WTC11 (cell line): ENCODE measurements at regions of chr17 and their contacts with region 1.

Region 1: GRCh38 chr17:21275579-21276263 is 8.8 kb upstream of the MAP2K3 start:
- DNase-seq: peak; percentile 93
- ATAC-seq: peak; percentile 81
- H3K4me3 Mint-ChIP-seq: peak overlapping the region; percentile 76
- H3K27ac Mint-ChIP-seq: no peak overlapping the region
- H3K4me1 Mint-ChIP-seq: peaks cover 9% of the 10 kb centered on the region
- H3K27me3 Mint-ChIP-seq: peaks cover 48% of the 10 kb centered on the region
- CTCF ChIP-seq: no peak

Region 2: DNA sequence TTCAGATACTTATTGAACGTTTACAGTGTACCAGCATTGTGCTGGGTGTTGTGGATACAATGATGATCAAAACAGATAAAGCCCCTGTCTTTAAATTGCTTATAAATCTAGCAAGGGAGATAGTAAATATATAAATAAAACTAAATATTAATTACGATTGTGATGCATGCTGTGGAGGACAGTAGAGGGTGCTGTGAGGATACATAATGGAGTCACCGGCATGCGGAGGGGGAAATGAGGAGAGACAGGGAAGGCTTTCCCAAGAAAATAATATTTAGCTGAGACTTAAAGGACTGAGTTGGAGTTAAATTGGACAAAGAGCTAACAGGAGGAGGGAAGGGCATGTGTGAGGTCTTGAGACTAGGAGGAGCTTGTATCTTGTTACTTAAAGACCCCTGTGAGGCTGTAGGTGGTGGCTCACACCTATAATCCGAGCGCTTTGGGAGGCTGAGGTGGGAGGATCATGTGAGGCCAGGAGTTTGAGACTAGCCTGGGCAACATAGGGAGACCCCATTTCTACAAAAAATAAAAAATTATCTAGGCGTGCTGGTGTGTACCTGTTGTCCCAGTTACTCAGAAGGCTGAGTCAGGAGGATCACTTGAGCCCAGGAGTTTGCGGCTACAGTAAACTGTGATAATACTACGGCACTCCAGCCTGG is 146.6 kb before region 1 on chr17:
- CTCF ChIA-PET with region 1: interaction called, 15 read pairs
- POLR2A ChIA-PET with region 1: interaction called, 3 read pairs
- DNase-seq: no peak
- ATAC-seq: no peak
- H3K4me3 Mint-ChIP-seq: peak overlapping the region; percentile 45
- H3K27ac Mint-ChIP-seq: peak overlapping the region; percentile 75
- H3K4me1 Mint-ChIP-seq: peaks cover 35% of the 10 kb centered on the region
- H3K27me3 Mint-ChIP-seq: peaks cover 4% of the 10 kb centered on the region; the same call in 1 of the 2 replicates
- CTCF ChIP-seq: no peak

Region 3: DNA sequence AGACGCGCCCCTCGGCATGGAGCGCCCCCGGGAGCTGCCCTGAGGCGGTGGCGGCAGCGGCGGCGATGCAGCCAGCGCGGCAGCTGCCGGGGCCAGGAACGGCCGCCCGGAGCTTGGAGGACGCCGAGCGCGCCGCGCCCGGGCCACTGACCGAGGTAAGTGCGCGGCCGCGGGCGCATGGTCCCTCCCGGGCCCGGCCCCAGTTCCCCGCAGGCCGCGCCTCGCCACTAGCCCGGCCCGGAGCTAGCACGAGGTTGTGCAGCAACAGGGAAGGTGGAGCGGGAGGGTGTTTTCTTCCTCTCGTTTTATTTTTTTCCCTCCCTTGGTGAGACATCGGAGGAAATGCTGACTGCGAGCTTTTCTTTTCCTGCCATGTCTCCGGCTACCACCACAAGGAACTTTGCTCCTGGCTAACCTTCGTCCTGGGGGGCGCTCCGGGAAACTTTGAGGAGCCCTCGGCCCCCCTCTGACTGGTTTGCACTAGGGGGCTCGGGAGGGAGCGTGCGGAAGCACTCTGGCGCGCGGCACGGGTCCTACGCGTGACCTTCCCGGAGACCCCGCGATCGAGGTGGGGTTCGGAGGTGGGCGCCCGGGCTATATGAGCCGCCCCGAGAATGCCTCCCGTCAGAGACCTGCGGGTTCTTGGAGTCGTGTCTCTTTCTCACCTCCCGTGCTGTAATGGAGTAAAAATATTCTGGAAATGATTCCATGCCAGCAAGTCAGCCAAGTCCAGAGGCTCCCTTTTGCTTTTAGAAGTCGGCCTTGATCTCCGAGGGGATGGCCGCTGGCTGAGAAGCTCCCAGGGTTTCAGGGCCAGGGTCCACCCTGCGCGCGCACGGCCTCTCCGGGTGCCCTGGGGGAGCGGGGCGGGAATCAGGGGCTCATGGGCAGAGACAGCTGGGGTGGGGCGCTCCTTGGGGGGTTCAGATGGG is 101.3 kb after region 1 on chr17:
- CTCF ChIA-PET with region 1: interaction called, 17 read pairs
- POLR2A ChIA-PET with region 1: no interaction called
- DNase-seq: peak; percentile 41
- ATAC-seq: peak; percentile 6
- H3K4me3 Mint-ChIP-seq: peak overlapping the region; percentile 76
- H3K27ac Mint-ChIP-seq: no peak overlapping the region
- H3K4me1 Mint-ChIP-seq: peaks cover 18% of the 10 kb centered on the region
- H3K27me3 Mint-ChIP-seq: peaks cover 46% of the 10 kb centered on the region
- CTCF ChIP-seq: no peak